ENCODE measurements at regions of chr1 and their contacts with region 1.

Region 1: DNA sequence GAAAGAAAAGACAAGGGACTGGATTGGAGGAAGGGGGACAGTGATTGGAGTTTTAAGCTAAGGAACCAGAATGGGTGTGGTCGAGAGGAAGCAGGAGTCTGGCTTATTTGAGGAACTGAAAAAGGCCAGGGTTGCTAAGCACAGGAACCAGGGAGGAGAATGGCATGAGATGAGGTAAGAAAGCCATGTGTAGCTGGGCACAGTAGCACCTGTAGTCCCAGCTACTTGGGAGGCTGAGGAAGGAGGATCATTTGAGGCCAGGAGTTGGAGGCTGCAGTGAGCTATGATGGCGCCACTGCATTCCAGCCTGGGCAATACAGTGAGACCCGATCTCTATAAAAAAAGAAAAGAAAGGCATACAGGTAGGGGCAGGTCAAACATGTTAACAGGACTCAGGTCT is 8.1 kb upstream of the KHDRBS1 start:
- DNase-seq: no peak
- ATAC-seq: no peak
- H3K4me3 Mint-ChIP-seq: no peak overlapping the region
- H3K27ac Mint-ChIP-seq: no peak overlapping the region
- H3K4me1 Mint-ChIP-seq: peaks cover 25% of the 10 kb centered on the region
- H3K27me3 Mint-ChIP-seq: peaks cover 3% of the 10 kb centered on the region

Region 2: DNA sequence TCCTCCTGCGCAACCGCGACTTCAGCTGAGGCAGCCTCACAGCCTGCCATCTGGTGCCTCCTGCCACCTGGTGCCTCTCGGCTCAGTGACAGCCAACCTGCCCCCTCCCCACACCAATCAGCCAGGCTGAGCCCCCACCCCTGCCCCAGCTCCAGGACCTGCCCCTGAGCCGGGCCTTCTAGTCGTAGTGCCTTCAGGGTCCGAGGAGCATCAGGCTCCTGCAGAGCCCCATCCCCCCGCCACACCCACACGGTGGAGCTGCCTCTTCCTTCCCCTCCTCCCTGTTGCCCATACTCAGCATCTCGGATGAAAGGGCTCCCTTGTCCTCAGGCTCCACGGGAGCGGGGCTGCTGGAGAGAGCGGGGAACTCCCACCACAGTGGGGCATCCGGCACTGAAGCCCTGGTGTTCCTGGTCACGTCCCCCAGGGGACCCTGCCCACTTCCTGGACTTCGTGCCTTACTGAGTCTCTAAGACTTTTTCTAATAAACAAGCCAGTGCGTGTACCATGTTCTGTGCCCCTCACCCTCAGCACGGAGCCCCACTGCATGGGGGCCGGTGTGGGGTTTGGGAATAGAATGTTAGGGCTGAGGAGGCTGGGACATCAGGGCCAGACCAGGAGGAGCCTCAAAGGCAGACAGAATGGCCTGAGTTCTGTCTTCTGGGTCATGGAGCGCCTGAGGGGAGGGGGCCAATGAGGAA is 571.2 kb before region 1 on chr1:
- CTCF ChIA-PET with region 1: no interaction called
- POLR2A ChIA-PET with region 1: no interaction called
- DNase-seq: no peak
- ATAC-seq: no peak
- H3K4me3 Mint-ChIP-seq: no peak overlapping the region
- H3K27ac Mint-ChIP-seq: no peak overlapping the region
- H3K4me1 Mint-ChIP-seq: no peaks in the 10 kb centered on the region
- H3K27me3 Mint-ChIP-seq: peaks cover 2% of the 10 kb centered on the region

Region 3: GRCh38 chr1:31970873-31971272 is 34.6 kb before region 1 on chr1:
- CTCF ChIA-PET with region 1: interaction called, 16 read pairs
- POLR2A ChIA-PET with region 1: no interaction called
- DNase-seq: no peak
- ATAC-seq: no peak
- H3K4me3 Mint-ChIP-seq: no peak overlapping the region
- H3K27ac Mint-ChIP-seq: peak overlapping the region; percentile 35
- H3K4me1 Mint-ChIP-seq: peaks cover 15% of the 10 kb centered on the region
- H3K27me3 Mint-ChIP-seq: peaks cover 8% of the 10 kb centered on the region

Region 4: GRCh38 chr1:31984419-31985347 is 20.8 kb before region 1 on chr1:
- CTCF ChIA-PET with region 1: interaction called, 33 read pairs
- POLR2A ChIA-PET with region 1: interaction called, 3 read pairs
- DNase-seq: peak; percentile 50
- ATAC-seq: peak; percentile 70
- H3K4me3 Mint-ChIP-seq: peak overlapping the region; percentile 4
- H3K27ac Mint-ChIP-seq: peak overlapping the region; percentile 95
- H3K4me1 Mint-ChIP-seq: peaks cover 67% of the 10 kb centered on the region
- H3K27me3 Mint-ChIP-seq: no peaks in the 10 kb centered on the region

Region 5: DNA sequence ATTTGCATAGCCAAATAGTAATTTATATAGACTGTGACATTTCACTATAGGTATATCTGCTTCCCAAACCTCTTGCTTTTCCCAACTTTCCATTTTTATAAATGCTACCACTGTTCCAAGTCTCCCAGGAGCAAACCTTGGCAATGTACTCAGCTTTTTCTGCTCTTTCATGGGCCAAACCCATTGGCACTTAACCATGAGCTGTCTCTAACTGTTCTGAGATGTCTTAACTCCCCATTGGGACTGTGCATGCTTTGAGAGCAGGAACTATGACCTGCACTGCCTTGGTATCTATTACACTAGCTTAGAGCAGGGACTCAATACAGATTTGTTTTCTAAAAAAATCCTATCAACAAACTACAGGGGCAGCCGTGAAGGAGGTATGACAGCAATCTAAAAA is 14.3 kb before region 1 on chr1:
- CTCF ChIA-PET with region 1: interaction called, 19 read pairs
- POLR2A ChIA-PET with region 1: no interaction called
- DNase-seq: no peak
- ATAC-seq: no peak
- H3K4me3 Mint-ChIP-seq: no peak overlapping the region
- H3K27ac Mint-ChIP-seq: no peak overlapping the region
- H3K4me1 Mint-ChIP-seq: peaks cover 43% of the 10 kb centered on the region
- H3K27me3 Mint-ChIP-seq: no peaks in the 10 kb centered on the region

Region 6: DNA sequence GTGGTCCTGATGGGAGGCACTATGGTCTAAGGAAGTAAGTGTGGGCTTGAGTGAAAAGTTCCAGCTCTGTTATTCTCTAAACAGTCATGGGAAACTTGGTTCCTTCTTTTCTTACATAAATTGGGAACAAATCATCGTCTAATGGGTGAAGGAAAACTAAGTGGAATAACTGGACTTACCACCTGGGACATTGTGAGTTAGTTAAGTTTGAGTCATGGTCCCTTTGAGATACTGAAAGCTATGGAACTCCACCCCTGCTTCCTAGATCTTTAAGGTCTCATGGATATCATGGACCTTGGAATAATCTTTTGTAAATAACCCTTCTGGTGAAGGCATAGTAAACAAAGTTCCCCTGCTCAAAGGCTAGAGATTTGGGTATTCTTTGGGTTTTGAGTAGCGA is 157.9 kb after region 1 on chr1:
- CTCF ChIA-PET with region 1: no interaction called
- POLR2A ChIA-PET with region 1: no interaction called
- DNase-seq: no peak
- ATAC-seq: no peak
- H3K4me3 Mint-ChIP-seq: no peak overlapping the region
- H3K27ac Mint-ChIP-seq: no peak overlapping the region
- H3K4me1 Mint-ChIP-seq: no peaks in the 10 kb centered on the region
- H3K27me3 Mint-ChIP-seq: no peaks in the 10 kb centered on the region